CD4-positive, alpha-beta T cell (primary cell): ENCODE measurements at regions of chr17 and their contacts with region 1.

Region 1: DNA sequence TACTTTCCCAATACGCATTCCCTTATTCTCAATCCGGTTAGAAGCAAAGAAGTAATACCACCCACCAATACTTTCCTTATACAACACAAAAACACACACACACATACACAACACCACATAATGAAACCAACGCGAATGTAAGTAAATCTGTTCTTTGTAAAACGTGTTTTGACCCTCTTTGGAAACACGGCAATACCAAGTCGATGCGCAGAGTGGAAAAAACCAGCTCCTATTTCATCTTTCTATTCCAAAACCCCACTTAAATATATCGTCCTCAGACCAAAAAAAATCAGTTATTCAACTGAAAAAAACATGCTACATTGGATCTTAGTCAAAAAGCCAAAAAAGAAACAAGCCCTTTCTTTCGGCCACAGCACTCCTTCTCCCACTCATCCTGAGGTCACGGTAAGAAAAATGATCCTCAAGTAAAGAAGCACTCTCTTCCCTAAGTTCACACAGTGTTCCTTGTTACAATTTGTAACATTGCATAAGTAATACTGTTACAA is 31.0 kb upstream of the ARL4D start:
- DNase-seq: peak in 2 of 14 experiments; percentile 70 to 88
- ATAC-seq: peak; percentile 47
- H3K4me3 ChIP-seq: peak overlapping the region; percentile 83
- H3K4me3 Mint-ChIP-seq: peak overlapping the region; percentile 95
- H3K27ac ChIP-seq: peak overlapping the region; percentile 86 to 97
- H3K27ac Mint-ChIP-seq: peak overlapping the region; percentile 98
- H3K4me1 ChIP-seq: peaks cover 38% of the 10 kb centered on the region
- H3K4me1 Mint-ChIP-seq: peaks cover 48% of the 10 kb centered on the region
- H3K27me3 ChIP-seq: no peaks in the 10 kb centered on the region
- H3K27me3 Mint-ChIP-seq: no peaks in the 10 kb centered on the region
- CTCF ChIP-seq: no peak

Region 2: GRCh38 chr17:43170766-43171585 is 196.8 kb before region 1 on chr17 and contains the start of gene NBR1:
- CTCF ChIA-PET with region 1: no interaction called
- POLR2A ChIA-PET with region 1: interaction called, 15 read pairs
- intact Hi-C with region 1: no loop called
- DNase-seq: peak; percentile 90 to 99 (median 92)
- ATAC-seq: peak; percentile 76
- H3K4me3 ChIP-seq: peak within 1 kb of the TSS; percentile 71
- H3K4me3 Mint-ChIP-seq: no peak within 1 kb of the TSS
- H3K27ac ChIP-seq: peak within 1 kb of the TSS; percentile 98
- H3K27ac Mint-ChIP-seq: no peak within 1 kb of the TSS
- H3K4me1 ChIP-seq: peaks cover 47% of the 10 kb centered on the region
- H3K4me1 Mint-ChIP-seq: peaks cover 27% of the 10 kb centered on the region
- H3K27me3 ChIP-seq: no peaks in the 10 kb centered on the region
- H3K27me3 Mint-ChIP-seq: no peaks in the 10 kb centered on the region
- CTCF ChIP-seq: no peak
- total RNA-seq, gene NBR1: 23.7 TPM

Region 3: GRCh38 chr17:43211480-43212402 is 156.0 kb before region 1 on chr17 and contains the start of gene TMEM106A:
- CTCF ChIA-PET with region 1: no interaction called
- POLR2A ChIA-PET with region 1: interaction called, 49 read pairs
- intact Hi-C with region 1: no loop called
- DNase-seq: peak; percentile 56 to 88 (median 68)
- ATAC-seq: peak; percentile 90
- H3K4me3 ChIP-seq: peak within 1 kb of the TSS; percentile 69
- H3K4me3 Mint-ChIP-seq: peak within 1 kb of the TSS; percentile 98
- H3K27ac ChIP-seq: peak within 1 kb of the TSS; percentile 72 to 77
- H3K27ac Mint-ChIP-seq: peak within 1 kb of the TSS; percentile 89
- H3K4me1 ChIP-seq: peaks cover 22% of the 10 kb centered on the region
- H3K4me1 Mint-ChIP-seq: peaks cover 38% of the 10 kb centered on the region
- H3K27me3 ChIP-seq: no peaks in the 10 kb centered on the region
- H3K27me3 Mint-ChIP-seq: no peaks in the 10 kb centered on the region
- CTCF ChIP-seq: peak; percentile 61
- total RNA-seq, gene TMEM106A: 6.3 to 6.4 TPM

Region 4: GRCh38 chr17:43217614-43218087 is 150.1 kb before region 1 on chr17:
- CTCF ChIA-PET with region 1: no interaction called
- POLR2A ChIA-PET with region 1: interaction called, 49 read pairs
- intact Hi-C with region 1: no loop called
- DNase-seq: peak in 1 of 14 experiments; percentile 9
- ATAC-seq: no peak
- H3K4me3 ChIP-seq: no peak overlapping the region
- H3K4me3 Mint-ChIP-seq: peak overlapping the region; percentile 45
- H3K27ac ChIP-seq: no peak overlapping the region
- H3K27ac Mint-ChIP-seq: peak overlapping the region; percentile 44
- H3K4me1 ChIP-seq: peaks cover 17% of the 10 kb centered on the region
- H3K4me1 Mint-ChIP-seq: peaks cover 29% of the 10 kb centered on the region
- H3K27me3 ChIP-seq: no peaks in the 10 kb centered on the region
- H3K27me3 Mint-ChIP-seq: no peaks in the 10 kb centered on the region
- CTCF ChIP-seq: no peak

Region 5: GRCh38 chr17:43330876-43331639 is 36.7 kb before region 1 on chr17:
- CTCF ChIA-PET with region 1: interaction called, 3 read pairs
- POLR2A ChIA-PET with region 1: interaction called, 10 read pairs
- intact Hi-C with region 1: no loop called
- DNase-seq: no peak
- ATAC-seq: no peak
- H3K4me3 ChIP-seq: no peak overlapping the region
- H3K4me3 Mint-ChIP-seq: no peak overlapping the region
- H3K27ac ChIP-seq: no peak overlapping the region
- H3K27ac Mint-ChIP-seq: no peak overlapping the region
- H3K4me1 ChIP-seq: peaks cover 8% of the 10 kb centered on the region
- H3K4me1 Mint-ChIP-seq: peaks cover 7% of the 10 kb centered on the region
- H3K27me3 ChIP-seq: peaks cover 0 to 5% of the 10 kb centered on the region in 2 experiments
- H3K27me3 Mint-ChIP-seq: peaks cover 18% of the 10 kb centered on the region
- CTCF ChIP-seq: no peak

Region 6: DNA sequence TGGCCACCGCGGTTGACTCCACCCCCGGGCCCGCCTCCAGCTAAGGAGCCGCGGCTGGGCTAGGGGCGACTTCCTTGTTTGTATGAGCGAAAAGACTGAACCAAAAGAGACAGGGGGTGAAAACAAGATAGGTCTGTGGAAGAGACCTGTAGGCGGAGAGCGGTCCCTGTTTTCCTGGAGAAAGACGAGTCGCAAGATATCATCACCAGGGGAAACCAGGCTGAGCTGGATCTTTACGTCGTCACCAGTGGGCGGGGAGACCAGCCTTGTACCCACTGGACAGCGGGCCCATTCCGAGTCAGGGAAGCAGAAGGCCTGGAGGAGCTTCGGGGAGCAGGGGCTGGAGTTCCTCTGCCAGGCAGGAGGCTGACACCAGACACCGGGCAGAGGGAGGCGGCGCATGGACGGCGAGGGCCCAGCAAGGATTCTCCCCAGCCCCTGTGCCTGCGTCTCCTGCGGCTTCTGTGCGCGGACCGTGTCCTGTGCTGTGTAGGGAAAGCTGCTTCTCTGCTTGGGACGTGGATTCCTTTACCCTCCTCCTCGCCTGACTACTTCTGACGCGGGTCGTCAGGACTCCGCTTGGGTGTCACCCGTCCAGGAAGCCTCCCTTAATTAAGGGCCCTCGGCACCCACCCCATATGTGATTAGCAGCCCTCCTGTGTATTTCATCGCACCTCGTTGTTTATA is 20.7 kb after region 1 on chr17:
- CTCF ChIA-PET with region 1: interaction called, 17 read pairs
- POLR2A ChIA-PET with region 1: interaction called, 445 read pairs
- intact Hi-C with region 1: loop called (anchors 1 kb)
- DNase-seq: peak; percentile 84 to 95 (median 90)
- ATAC-seq: peak; percentile 70
- H3K4me3 ChIP-seq: peak overlapping the region; percentile 71
- H3K4me3 Mint-ChIP-seq: peak overlapping the region; percentile 93
- H3K27ac ChIP-seq: peak overlapping the region; percentile 94 to 97
- H3K27ac Mint-ChIP-seq: peak overlapping the region; percentile 97
- H3K4me1 ChIP-seq: peaks cover 27% of the 10 kb centered on the region
- H3K4me1 Mint-ChIP-seq: peaks cover 36% of the 10 kb centered on the region
- H3K27me3 ChIP-seq: no peaks in the 10 kb centered on the region
- H3K27me3 Mint-ChIP-seq: no peaks in the 10 kb centered on the region
- CTCF ChIP-seq: no peak

Region 7: GRCh38 chr17:43393944-43394482 is 26.2 kb after region 1 on chr17:
- CTCF ChIA-PET with region 1: interaction called, 10 read pairs
- POLR2A ChIA-PET with region 1: interaction called, 445 read pairs
- intact Hi-C with region 1: loop called (anchors 1 to 5 kb)
- DNase-seq: peak; percentile 77 to 94 (median 89)
- ATAC-seq: peak; percentile 27
- H3K4me3 ChIP-seq: no peak overlapping the region
- H3K4me3 Mint-ChIP-seq: peak overlapping the region; percentile 49
- H3K27ac ChIP-seq: peak overlapping the region in 1 of 2 donors; percentile 14
- H3K27ac Mint-ChIP-seq: peak overlapping the region; percentile 16
- H3K4me1 ChIP-seq: peaks cover 40% of the 10 kb centered on the region
- H3K4me1 Mint-ChIP-seq: peaks cover 37% of the 10 kb centered on the region
- H3K27me3 ChIP-seq: no peaks in the 10 kb centered on the region
- H3K27me3 Mint-ChIP-seq: no peaks in the 10 kb centered on the region
- CTCF ChIP-seq: peak; percentile 90

Region 8: GRCh38 chr17:43823350-43824084 is 455.7 kb after region 1 on chr17:
- CTCF ChIA-PET with region 1: no interaction called
- POLR2A ChIA-PET with region 1: no interaction called
- intact Hi-C with region 1: no loop called
- DNase-seq: no peak
- ATAC-seq: no peak
- H3K4me3 ChIP-seq: no peak overlapping the region
- H3K4me3 Mint-ChIP-seq: no peak overlapping the region
- H3K27ac ChIP-seq: no peak overlapping the region
- H3K27ac Mint-ChIP-seq: no peak overlapping the region
- H3K4me1 ChIP-seq: no peaks in the 10 kb centered on the region
- H3K4me1 Mint-ChIP-seq: no peaks in the 10 kb centered on the region
- H3K27me3 ChIP-seq: no peaks in the 10 kb centered on the region
- H3K27me3 Mint-ChIP-seq: no peaks in the 10 kb centered on the region
- CTCF ChIP-seq: no peak